BJ (cell line): ENCODE measurements at regions of chr5 and their contacts with region 1.

Region 1: DNA sequence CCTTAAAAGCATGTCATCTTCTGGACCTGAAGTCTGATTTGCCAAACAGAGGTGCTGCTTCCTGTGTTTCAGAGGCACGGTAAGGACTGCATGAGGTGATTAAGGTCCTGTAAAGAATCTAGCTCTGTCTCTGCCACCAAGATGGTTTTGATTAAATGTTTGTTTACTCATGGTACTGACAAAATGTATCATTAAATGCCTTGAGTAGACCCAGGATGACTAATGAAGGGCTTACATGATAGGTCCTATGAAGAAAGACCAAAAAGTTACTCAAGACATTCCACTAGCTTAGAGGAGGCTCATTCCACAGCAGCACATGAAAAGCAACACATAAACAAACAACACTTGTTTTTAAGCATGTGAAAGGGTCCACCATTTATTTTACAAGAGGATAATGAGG is 100.9 kb downstream of the BOD1 start:
- DNase-seq: peak; percentile 93
- H3K4me3 ChIP-seq: no peak overlapping the region
- H3K27me3 ChIP-seq: no peaks in the 10 kb centered on the region
- CTCF ChIP-seq: no peak

Region 2: DNA sequence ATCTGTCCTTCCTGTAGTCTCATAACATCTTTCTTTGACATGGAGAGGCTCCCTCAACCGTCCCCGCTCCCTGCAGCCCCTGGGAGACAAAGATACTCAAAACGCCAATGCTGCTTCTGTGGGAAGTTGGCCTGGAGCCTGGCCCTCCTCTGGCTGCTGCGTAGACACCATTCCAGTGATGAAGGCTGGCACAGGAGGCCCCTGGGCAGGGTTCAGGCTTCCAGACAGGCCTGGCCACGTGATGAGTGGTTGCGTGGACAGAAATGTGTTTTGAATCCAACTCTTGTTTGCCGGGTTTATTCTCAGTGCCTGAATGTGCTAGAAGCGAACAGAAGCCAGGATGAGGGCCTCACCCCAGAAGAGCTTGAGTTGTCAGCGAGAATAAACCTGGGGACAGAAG is 237.3 kb before region 1 on chr5:
- CTCF ChIA-PET with region 1: no interaction called
- POLR2A ChIA-PET with region 1: no interaction called
- DNase-seq: no peak
- H3K4me3 ChIP-seq: no peak overlapping the region
- H3K27me3 ChIP-seq: peaks cover 14% of the 10 kb centered on the region
- CTCF ChIP-seq: no peak

Region 3: DNA sequence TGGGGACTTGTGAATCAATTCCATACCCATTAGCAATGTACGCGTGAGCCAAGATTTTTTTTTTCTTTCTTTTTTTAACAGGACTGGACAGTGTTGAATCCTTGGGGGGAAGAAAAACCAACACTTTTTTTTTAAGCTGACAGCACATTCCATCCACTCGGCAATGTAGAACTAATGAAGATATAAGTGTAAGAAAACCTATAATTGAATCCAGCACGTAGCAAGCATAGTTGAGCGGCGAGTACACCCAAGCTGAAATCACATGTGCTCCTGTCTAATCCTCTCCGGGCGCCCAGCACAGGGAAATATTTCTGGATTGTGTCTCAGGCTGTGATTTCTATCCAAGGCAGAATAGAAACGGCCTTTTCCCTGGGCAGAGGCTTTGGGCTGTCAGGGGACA is 17.2 kb before region 1 on chr5:
- CTCF ChIA-PET with region 1: interaction called, 13 read pairs
- POLR2A ChIA-PET with region 1: no interaction called
- DNase-seq: peak; percentile 74
- H3K4me3 ChIP-seq: no peak overlapping the region
- H3K27me3 ChIP-seq: no peaks in the 10 kb centered on the region
- CTCF ChIP-seq: no peak